WTC11 (cell line): ENCODE measurements at regions of chr14 and their contacts with region 1.

Region 1: DNA sequence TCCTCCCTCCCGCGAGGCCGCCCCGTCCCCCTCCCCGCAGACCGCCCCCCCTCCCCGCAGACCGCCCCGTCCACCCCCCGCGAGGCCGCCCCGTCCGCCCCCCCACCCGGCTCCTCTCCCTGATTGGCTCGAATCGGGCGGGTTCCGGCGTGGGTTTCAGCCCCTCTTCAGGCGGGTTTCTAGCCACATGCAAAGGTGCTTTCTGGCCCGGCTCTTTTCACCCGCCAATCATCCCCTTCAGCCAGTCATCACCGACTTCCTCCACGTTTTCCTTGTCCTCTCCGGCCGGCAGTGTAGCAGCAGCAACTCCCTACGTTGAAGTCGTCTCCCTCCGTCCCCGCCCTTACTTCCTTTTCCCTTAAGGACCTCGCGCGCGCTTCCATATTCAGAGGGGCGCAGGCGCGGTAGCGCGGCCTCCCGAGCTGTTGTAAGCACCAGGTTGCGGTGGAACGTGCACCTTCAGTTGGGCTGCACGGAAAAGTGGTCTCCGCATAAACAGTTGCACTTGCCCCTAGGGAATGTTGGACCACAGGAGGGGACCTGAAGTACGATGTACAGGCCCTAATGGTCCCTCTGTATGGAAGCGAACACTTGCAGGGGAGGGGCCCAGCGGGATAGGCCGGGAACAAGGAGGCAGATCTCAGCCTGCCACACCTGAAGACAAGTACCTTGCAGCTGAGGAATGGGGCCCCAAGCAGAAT is 44.6 kb upstream of the ESR2 start:
- DNase-seq: peak; percentile 93
- ATAC-seq: peak; percentile 88
- H3K4me3 Mint-ChIP-seq: peak overlapping the region; percentile 91
- H3K27ac Mint-ChIP-seq: peak overlapping the region; percentile 99
- H3K4me1 Mint-ChIP-seq: peaks cover 29% of the 10 kb centered on the region
- H3K27me3 Mint-ChIP-seq: peaks cover 2% of the 10 kb centered on the region; the same call in 1 of the 2 replicates
- CTCF ChIP-seq: no peak

Region 2: DNA sequence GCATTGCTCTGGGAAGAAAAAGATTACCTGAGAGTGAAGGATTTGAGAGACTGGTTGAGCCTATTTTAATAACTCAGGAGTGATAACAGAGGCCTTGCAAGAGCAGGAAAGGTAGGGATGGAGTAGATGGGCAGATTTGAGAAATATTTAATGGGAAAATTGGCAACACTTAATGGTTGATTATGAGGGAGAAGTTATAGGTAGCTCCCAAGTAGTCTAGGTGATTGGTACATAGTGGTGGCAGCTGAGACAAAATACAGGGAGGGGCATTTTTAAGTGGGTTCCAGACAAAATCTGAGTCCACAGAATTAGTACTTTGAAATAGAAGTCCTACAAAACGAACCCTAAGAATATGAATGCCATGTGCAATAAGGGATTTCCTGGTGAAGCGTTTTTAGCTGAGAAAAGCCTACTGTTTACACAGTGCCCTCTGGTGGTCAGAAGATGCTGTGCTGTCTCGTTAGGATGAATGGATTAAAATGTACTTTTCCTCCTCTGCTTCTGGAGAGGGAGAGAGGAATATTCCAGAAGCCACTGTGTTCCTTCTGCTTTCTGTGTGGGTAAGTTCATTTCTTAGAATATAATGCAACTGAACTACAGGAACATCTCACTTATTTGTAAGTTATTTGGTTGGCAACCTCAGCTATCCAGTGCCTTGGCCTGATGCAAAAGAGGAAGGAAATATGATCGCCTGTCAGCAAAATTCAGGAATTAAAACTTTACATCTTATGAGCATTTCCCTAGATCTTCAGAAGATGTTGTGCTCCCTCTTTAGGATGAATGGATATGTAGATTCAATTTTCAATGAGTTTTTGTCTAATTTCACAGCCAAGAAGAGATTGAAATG is 172.3 kb after region 1 on chr14:
- CTCF ChIA-PET with region 1: interaction called, 10 read pairs
- POLR2A ChIA-PET with region 1: no interaction called
- DNase-seq: peak; percentile 63
- ATAC-seq: peak; percentile 51; the same call in 1 of the 2 replicates
- H3K4me3 Mint-ChIP-seq: no peak overlapping the region
- H3K27ac Mint-ChIP-seq: peak overlapping the region; percentile 77
- H3K4me1 Mint-ChIP-seq: peaks cover 49% of the 10 kb centered on the region
- H3K27me3 Mint-ChIP-seq: no peaks in the 10 kb centered on the region
- CTCF ChIP-seq: peak; percentile 73